Uterus (tissue), 4 donors: ENCODE measurements at regions of chr17 and their contacts with region 1.

Region 1: DNA sequence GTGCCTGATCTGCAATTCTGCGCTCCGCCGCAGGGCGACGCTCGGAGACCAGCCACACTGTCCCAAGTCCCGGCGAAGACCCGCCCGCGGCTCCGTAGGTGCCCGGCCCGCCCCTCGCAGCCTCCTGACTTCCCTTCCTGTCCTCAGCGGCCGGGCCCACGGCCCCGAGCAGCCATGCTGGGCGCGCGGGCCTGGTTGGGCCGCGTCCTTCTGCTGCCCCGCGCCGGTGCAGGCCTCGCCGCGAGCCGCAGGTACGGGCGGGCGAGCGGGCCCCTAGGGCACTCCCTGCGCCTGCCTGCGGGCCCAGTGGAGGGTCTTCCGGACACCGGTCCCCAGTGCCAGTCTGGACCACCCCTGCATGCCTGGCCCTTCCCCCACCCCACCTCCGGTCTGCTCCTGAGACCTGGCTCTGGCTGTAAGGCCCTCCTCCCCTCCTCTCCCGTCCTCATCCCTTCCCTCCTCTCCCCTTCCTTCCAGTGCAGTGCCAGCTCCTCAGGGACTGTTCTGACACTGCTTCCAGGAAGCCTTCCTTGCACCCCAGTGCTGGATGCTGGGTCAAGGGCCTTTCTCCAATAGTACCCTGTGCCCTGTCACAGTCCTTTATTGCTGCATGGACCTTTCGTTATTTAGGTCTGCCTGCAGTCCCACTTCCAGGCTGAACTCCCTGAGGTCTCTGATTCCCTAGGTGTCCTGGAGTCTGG is at the start of gene SPATA20:
- DNase-seq: peak; percentile 91 to 92
- H3K4me3 ChIP-seq: peak within 1 kb of the TSS; percentile 46 to 60
- H3K27ac ChIP-seq: peak within 1 kb of the TSS; percentile 85 to 91
- H3K4me1 ChIP-seq: peaks cover 4 to 5% of the 10 kb centered on the region in 2 donors
- H3K27me3 ChIP-seq: no peaks in the 10 kb centered on the region
- CTCF ChIP-seq: peak; percentile 99 to 100 (median 100)
- POLR2A ChIP-seq: peak; percentile 76 to 90
- total RNA-seq, gene SPATA20: 39.7 to 57.2 (median 46.2) TPM

Region 2: DNA sequence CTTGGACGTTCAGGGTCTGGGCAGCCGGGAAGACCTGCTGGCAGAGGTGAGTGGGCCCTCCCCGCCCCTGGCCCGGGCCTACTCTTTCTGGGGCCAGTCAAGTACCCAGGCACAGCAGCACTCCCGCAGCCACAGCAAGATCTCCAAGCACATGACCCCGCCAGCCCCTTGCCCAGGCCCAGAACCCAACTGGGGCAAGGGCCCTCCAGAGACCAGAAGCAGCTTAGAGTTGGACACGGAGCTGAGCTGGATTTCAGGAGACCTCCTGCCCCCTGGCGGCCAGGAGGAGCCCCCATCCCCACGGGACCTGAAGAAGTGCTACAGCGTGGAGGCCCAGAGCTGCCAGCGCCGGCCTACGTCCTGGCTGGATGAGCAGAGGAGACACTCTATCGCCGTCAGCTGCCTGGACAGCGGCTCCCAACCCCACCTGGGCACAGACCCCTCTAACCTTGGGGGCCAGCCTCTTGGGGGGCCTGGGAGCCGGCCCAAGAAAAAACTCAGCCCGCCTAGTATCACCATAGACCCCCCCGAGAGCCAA is 78.9 kb after region 1 on chr17:
- intact Hi-C with region 1: loop called (anchors 5 kb)
- DNase-seq: peak; percentile 75 to 83
- H3K4me3 ChIP-seq: no peak overlapping the region
- H3K27ac ChIP-seq: no peak overlapping the region
- H3K4me1 ChIP-seq: no peaks in the 10 kb centered on the region
- H3K27me3 ChIP-seq: no peaks in the 10 kb centered on the region
- CTCF ChIP-seq: peak; percentile 77 to 85 (median 82)
- POLR2A ChIP-seq: no peak

Region 3: GRCh38 chr17:50681263-50682210 is 134.4 kb after region 1 on chr17:
- intact Hi-C with region 1: loop called (anchors 10 kb)
- DNase-seq: peak; percentile 57 to 70
- H3K4me3 ChIP-seq: no peak overlapping the region
- H3K27ac ChIP-seq: peak overlapping the region; percentile 32 to 50
- H3K4me1 ChIP-seq: peaks cover 5 to 7% of the 10 kb centered on the region in 2 donors
- H3K27me3 ChIP-seq: no peaks in the 10 kb centered on the region
- CTCF ChIP-seq: peak; percentile 43 to 76 (median 62)
- POLR2A ChIP-seq: no peak

Region 4: DNA sequence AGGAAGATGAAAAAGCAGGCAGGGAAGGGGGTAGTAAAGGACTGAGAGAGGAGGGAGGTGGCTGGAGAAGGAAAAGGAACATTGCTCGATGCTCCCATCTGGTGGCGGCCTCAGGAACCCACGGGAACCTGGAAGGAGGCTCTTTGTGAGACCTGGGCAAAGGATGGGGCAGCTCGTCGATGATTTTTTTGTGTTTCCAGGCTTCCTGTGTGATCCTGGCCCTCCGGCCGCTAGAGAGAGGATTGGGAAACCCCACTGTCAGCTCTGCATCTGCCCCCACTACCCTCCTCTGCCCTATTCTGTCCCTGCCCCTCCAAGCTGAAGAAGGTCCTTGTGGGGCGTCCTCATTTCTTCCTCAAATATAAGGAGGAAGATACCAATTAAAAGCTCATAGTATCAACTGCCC is 294.8 kb after region 1 on chr17:
- intact Hi-C with region 1: loop called (anchors 5 kb)
- DNase-seq: peak; percentile 69 to 75
- H3K4me3 ChIP-seq: no peak overlapping the region
- H3K27ac ChIP-seq: no peak overlapping the region
- H3K4me1 ChIP-seq: no peaks in the 10 kb centered on the region
- H3K27me3 ChIP-seq: no peaks in the 10 kb centered on the region
- CTCF ChIP-seq: peak; percentile 72 to 89 (median 84)
- POLR2A ChIP-seq: no peak